ENCODE measurements at regions of chr11 and their contacts with region 1.

Region 1: GRCh38 chr11:842370-843002 is at the starts of genes POLR2L and TSPAN4:
- DNase-seq: peak; percentile 90
- H3K4me3 Mint-ChIP-seq: peak within 1 kb of the TSS; percentile 85
- H3K27ac Mint-ChIP-seq: peak within 1 kb of the TSS; percentile 74
- H3K4me1 Mint-ChIP-seq: peaks cover 22% of the 10 kb centered on the region
- H3K27me3 Mint-ChIP-seq: peaks cover 4% of the 10 kb centered on the region
- total RNA-seq, gene POLR2L: 70.4 to 74.0 TPM
- total RNA-seq, gene TSPAN4: 5.2 to 5.3 TPM

Region 2: DNA sequence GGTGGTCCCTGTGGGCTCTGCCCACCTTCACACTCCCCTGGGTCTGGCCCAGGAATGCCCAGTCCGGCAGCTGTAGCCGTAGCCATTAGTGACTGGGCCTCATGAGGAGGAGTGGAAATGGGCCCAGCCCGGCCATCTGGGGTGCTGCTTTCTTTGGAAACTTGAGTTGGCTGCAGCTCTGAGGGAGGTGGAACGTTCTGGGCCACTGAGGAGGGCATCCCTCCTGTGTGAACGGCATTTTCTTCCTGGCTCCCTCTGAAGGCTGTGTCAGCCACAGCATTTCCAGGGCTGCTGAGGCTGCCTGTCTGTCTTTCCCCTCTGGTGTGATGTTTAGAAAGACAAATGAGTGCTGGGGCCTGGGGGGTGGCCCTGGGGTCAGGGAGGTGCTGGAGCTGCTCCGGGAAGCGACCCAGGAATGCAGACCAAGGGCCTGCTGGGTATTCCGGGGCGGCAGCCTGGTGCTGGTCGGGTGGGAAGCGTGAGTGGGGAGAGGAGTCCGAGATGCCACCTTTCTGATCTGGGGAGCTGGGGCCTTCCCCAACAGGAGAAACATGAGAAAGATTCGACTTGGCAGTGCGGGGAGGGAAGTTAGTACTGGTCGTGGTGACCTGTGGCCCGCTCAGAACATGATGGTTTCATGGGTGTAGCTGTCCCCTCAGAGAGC is 365.3 kb before region 1 on chr11:
- CTCF ChIA-PET with region 1: no interaction called
- POLR2A ChIA-PET with region 1: no interaction called
- intact Hi-C with region 1: no loop called
- DNase-seq: no peak
- H3K4me3 Mint-ChIP-seq: no peak overlapping the region
- H3K27ac Mint-ChIP-seq: no peak overlapping the region
- H3K4me1 Mint-ChIP-seq: no peaks in the 10 kb centered on the region
- H3K27me3 Mint-ChIP-seq: no peaks in the 10 kb centered on the region

Region 3: GRCh38 chr11:727859-728748 is 114.4 kb before region 1 on chr11:
- CTCF ChIA-PET with region 1: no interaction called
- POLR2A ChIA-PET with region 1: no interaction called
- intact Hi-C with region 1: no loop called
- DNase-seq: peak; percentile 88
- H3K4me3 Mint-ChIP-seq: no peak overlapping the region
- H3K27ac Mint-ChIP-seq: no peak overlapping the region
- H3K4me1 Mint-ChIP-seq: peaks cover 18% of the 10 kb centered on the region
- H3K27me3 Mint-ChIP-seq: peaks cover 1% of the 10 kb centered on the region

Region 4: DNA sequence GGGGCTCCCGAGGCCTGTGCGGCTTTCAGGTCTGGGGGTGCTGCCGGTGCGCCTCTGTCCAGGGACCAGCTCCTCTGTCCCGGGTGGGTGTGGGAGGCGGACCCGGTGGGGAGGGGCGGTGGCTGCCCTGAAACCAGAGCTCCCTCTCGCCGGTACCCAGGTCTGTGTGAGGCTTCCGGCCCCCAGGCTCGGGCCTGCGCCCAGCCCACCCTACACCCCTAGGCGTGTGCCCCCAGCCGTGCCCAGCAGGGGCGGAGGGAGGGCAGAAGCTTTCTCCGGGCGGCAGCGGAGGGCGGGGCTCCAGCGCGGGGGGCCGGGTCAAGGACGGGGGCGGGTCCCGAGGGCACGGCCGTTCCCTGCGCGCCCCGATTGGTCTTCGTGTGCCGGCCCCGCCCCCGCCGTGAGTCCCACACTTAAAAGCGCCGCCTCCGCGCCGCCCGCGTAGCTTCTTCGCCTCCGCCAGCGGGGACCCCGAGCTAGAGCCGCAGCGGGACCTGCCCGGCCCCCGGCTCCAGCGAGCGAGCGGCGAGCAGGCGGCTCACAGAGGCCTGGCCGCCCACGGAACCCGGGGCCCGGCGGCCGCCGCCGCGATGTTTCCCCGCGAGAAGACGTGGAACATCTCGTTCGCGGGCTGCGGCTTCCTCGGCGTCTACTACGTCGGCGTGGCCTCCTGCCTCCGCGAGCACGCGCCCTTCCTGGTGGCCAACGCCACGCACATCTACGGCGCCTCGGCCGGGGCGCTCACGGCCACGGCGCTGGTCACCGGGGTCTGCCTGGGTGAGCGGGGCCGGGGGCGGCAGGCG is 23.2 kb before region 1 on chr11:
- CTCF ChIA-PET with region 1: no interaction called
- POLR2A ChIA-PET with region 1: no interaction called
- intact Hi-C with region 1: no loop called
- DNase-seq: peak; percentile 92
- H3K4me3 Mint-ChIP-seq: peak overlapping the region; percentile 79
- H3K27ac Mint-ChIP-seq: peak overlapping the region; percentile 58
- H3K4me1 Mint-ChIP-seq: peaks cover 14% of the 10 kb centered on the region
- H3K27me3 Mint-ChIP-seq: no peaks in the 10 kb centered on the region

Region 5: DNA sequence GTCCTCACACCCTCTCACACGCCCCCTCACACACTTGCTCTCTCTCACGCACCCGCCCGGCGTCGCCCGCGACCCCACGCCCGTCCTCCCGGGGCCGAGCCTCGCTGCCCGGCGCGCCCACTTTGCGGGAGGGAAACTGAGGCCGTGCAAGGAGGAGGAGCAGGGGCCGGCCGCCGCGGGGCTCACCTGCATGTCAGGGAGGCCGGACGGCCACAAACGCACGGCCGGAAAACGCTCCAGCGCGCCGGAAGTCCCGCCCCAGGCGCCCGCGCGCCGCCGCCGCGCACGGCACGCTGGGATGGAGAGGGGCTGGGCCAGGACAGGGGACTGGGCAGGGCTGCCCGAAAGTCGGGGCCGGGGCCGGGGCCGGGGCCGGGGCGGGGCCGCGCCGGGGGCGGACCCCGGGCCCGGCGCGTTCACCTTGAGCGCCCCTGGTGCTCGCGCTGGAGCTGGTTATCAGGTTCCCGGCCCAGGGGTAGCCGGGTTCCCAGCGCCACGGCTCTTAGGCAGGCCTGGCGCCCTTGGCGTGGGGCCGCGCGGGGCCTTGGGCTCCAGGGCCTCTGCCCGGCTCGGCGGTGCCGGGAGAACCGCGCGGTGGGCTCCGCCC is 68.2 kb after region 1 on chr11 and contains the start of gene CHID1:
- CTCF ChIA-PET with region 1: interaction called, 3 read pairs
- POLR2A ChIA-PET with region 1: no interaction called
- intact Hi-C with region 1: loop called (anchors 2 kb)
- DNase-seq: peak; percentile 92
- H3K4me3 Mint-ChIP-seq: peak within 1 kb of the TSS; percentile 89
- H3K27ac Mint-ChIP-seq: peak within 1 kb of the TSS; percentile 76
- H3K4me1 Mint-ChIP-seq: peaks cover 14% of the 10 kb centered on the region
- H3K27me3 Mint-ChIP-seq: no peaks in the 10 kb centered on the region
- total RNA-seq, gene CHID1: 61.5 to 61.6 TPM

Region 6: DNA sequence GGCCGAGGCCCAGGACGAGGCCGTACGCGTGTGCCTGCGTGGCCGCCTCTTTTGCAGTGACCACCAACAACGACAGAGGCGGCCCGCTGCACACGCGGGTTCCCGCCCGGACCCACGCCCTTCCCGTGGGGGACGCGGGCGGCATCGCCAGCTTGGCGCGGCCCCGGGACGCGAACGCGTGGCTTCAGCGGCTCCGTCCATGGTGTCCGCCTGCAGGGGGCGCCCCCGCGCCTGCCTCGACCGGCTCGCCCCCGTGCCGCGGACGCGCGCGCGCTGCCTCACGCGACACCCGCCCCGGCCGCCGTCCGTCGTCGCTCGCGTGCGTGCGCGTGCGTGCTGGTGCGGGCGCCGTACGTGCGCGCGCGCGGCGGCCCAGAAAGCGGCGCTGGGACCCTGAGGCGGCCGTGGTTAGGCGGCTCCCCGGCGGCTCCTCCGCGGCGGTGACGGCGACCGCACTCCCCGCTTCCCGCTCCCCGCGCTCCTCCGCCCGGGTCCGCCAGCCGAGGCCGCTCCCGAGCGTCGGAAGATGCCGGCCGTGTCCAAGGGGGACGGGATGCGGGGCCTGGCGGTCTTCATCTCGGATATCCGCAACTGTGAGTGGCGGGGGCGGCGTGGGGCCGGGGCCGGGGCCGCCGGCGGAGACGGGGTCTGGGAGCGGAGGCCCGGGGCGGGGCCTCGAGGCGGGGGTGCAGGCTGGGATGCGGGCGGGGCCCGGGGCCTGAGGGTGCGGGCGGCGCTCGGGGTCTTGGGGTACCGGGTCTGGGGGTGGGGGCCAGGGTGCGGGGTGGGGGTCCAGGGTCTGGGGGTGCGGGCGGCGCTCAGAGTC is 83.2 kb after region 1 on chr11 and contains the start of gene AP2A2:
- CTCF ChIA-PET with region 1: no interaction called
- POLR2A ChIA-PET with region 1: no interaction called
- intact Hi-C with region 1: loop called (anchors 5 kb)
- DNase-seq: peak; percentile 91
- H3K4me3 Mint-ChIP-seq: peak within 1 kb of the TSS; percentile 78
- H3K27ac Mint-ChIP-seq: peak within 1 kb of the TSS; percentile 75
- H3K4me1 Mint-ChIP-seq: peaks cover 29% of the 10 kb centered on the region
- H3K27me3 Mint-ChIP-seq: no peaks in the 10 kb centered on the region
- total RNA-seq, gene AP2A2: 42.8 to 44.1 TPM

Region 7: GRCh38 chr11:1050581-1051355 is 208.3 kb after region 1 on chr11:
- CTCF ChIA-PET with region 1: interaction called, 33 read pairs
- POLR2A ChIA-PET with region 1: interaction called, 3 read pairs
- intact Hi-C with region 1: no loop called
- DNase-seq: peak; percentile 83
- H3K4me3 Mint-ChIP-seq: no peak overlapping the region
- H3K27ac Mint-ChIP-seq: no peak overlapping the region
- H3K4me1 Mint-ChIP-seq: peaks cover 4% of the 10 kb centered on the region
- H3K27me3 Mint-ChIP-seq: peaks cover 26% of the 10 kb centered on the region

Measured in activated CD4-positive, alpha-beta memory T cell treated with anti-CD3 and anti-CD28 coated beads for 36 hours (primary cell).